ENCODE measurements at regions of chr18 and their contacts with region 1.

Region 1: GRCh38 chr18:21330122-21330701 is 88.2 kb downstream of the GREB1L start:
- DNase-seq: no peak
- ATAC-seq: no peak
- H3K4me3 ChIP-seq: no peak overlapping the region
- H3K27ac ChIP-seq: no peak overlapping the region
- H3K4me1 ChIP-seq: no peaks in the 10 kb centered on the region; a peak in 1 of 5 replicates
- H3K27me3 ChIP-seq: no peaks in the 10 kb centered on the region; a peak in 2 of 5 replicates
- CTCF ChIP-seq: no peak
- EP300 ChIP-seq: no peak
- POLR2A ChIP-seq: no peak
- RAD21 ChIP-seq: no peak

Region 2: DNA sequence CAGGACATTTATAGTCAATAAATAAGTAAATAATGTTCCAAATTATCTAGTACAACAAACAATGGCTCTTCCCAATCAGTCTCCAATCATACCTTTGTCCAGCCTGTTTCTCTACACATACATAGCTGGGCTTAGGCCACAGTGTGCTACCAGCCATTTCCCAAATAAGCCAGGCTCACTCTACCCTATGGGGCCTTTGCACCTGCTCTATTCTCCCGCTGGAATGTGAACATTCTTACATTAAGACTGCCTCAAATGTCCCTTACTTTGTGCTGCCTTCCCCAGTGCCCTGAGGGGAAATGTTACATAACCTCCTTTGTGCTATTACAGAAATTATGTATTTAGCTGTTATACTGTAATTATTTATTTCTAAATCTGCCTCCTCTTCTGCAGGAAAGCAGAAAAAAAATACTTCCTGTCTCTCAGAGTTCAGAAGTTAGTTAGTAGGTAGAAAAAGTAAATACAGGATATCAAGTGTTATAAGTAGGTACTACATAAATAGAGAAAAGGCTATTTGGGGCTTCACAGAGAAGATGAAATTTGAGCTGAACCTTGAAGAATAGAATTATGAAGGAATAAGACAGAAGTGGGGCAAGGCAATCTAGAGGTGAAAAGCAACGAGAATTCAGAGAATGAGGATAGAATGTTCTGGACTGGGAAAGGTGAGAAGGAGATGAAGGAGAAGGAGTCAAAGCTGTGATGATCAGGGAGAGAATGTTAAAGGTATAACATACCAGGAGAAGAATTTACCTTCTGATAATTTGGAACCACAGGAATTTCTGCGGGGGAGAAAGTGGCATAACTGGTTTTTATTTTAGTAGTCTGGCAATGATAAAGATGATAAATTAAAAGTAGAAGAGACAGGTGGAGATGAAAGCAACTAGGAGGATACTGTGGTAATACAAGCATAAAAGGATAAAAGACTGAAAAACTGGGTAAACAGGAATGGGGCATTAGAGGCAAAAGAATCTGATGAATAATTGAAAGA is 255.6 kb before region 1 on chr18:
- CTCF ChIA-PET with region 1: no interaction called
- POLR2A ChIA-PET with region 1: no interaction called
- in situ Hi-C with region 1: no loop called
- intact Hi-C with region 1: no loop called
- DNase-seq: no peak
- ATAC-seq: no peak
- H3K4me3 ChIP-seq: no peak overlapping the region
- H3K27ac ChIP-seq: no peak overlapping the region
- H3K4me1 ChIP-seq: no peaks in the 10 kb centered on the region; a peak in 2 of 5 replicates
- H3K27me3 ChIP-seq: no peaks in the 10 kb centered on the region
- CTCF ChIP-seq: no peak
- EP300 ChIP-seq: no peak
- POLR2A ChIP-seq: no peak
- RAD21 ChIP-seq: no peak

Region 3: DNA sequence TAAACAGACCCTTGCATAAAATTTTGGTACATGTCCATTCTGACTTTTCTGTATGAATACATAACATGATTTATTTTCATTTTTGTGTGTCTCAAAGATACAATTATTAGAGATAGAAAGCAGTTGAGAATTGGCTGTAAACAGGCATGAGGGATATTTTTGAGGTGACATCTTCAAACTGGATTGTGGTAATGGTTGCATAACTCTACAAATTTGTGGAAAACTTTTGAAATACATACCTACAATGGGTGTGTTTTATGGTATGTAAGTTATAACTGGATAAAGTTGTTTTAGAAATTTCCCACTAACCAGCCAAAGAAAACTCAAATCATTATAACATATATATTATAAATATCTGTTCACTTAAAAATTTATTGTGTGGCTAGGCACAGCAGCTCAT is 48.6 kb before region 1 on chr18:
- CTCF ChIA-PET with region 1: no interaction called
- POLR2A ChIA-PET with region 1: no interaction called
- in situ Hi-C with region 1: no loop called
- intact Hi-C with region 1: loop called (anchors 10 kb)
- DNase-seq: no peak
- ATAC-seq: no peak
- H3K4me3 ChIP-seq: no peak overlapping the region
- H3K27ac ChIP-seq: no peak overlapping the region
- H3K4me1 ChIP-seq: no peaks in the 10 kb centered on the region
- H3K27me3 ChIP-seq: no peaks in the 10 kb centered on the region
- CTCF ChIP-seq: no peak
- EP300 ChIP-seq: no peak
- POLR2A ChIP-seq: no peak
- RAD21 ChIP-seq: no peak

Region 4: GRCh38 chr18:21315741-21316187 is 14.4 kb before region 1 on chr18:
- CTCF ChIA-PET with region 1: no interaction called
- POLR2A ChIA-PET with region 1: no interaction called
- in situ Hi-C with region 1: no loop called
- intact Hi-C with region 1: no loop called
- DNase-seq: no peak
- ATAC-seq: peak; percentile 63; the same call in 2 of the 3 replicates
- H3K4me3 ChIP-seq: no peak overlapping the region
- H3K27ac ChIP-seq: no peak overlapping the region
- H3K4me1 ChIP-seq: no peaks in the 10 kb centered on the region
- H3K27me3 ChIP-seq: peaks cover 0 to 5% of the 10 kb centered on the region in 2 experiments; a peak in 3 of 5 replicates
- CTCF ChIP-seq: no peak
- EP300 ChIP-seq: no peak
- POLR2A ChIP-seq: no peak
- RAD21 ChIP-seq: no peak

Measured in K562 (cell line).